Psoas muscle (tissue), 8 donors: ENCODE measurements at regions of chr14 and their contacts with region 1.

Region 1: DNA sequence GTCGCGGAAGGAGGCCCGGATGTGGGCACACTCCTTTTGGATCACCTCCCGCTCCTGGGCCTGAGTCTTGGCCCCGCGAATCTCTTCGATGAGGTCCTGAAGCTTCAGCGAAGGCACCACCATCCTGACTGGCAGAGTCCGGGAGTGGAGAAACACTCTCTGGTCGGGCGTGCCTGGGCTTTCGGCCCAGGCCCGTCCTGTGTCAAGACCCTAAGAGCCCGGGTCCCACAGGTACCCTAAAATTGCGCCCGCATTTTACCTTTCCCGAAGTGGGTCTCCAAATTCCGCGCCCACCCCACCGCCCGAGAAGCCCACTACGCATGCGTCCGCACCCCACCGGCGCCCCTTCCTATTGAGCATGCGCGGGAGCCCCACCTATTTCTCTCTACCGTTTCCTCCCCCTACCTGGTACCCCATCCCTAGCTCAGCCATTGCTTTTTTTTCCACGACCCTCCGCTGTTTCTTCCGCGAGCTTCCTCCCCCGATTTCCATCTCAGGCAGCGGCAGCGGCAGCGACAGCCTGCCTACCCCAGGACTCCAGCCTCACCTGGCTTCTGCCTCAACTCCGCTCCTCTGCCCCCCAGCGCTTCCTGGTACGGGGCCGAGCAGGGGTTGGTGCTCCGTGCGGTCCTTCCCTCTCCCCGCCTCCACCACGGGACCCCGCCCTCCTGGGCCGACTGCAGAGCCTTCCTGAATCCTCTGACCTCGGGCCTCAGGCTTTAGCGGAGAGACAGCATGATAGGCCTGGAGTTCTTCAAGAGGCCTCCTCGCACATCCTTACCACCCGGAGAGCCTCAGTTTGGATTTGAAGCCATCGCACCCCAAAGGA is at the start of gene AP1G2:
- DNase-seq: peak; percentile 84 to 89
- ATAC-seq: peak; percentile 40 to 73 (median 50)
- H3K4me3 ChIP-seq: peak within 1 kb of the TSS; percentile 78
- H3K27ac ChIP-seq: peak within 1 kb of the TSS; percentile 41
- H3K4me1 ChIP-seq: peaks cover 3% of the 10 kb centered on the region
- H3K27me3 ChIP-seq: peaks cover 0 to 5% (median 0%) of the 10 kb centered on the region in 3 donors
- CTCF ChIP-seq: no peak
- total RNA-seq, gene AP1G2: 4.4 to 11.0 (median 6.1) TPM

Region 2: GRCh38 chr14:23269193-23269592 is 298.2 kb before region 1 on chr14:
- intact Hi-C with region 1: loop called in 1 of 2 experiments (anchors 10 kb)
- DNase-seq: no peak
- ATAC-seq: no peak
- H3K4me3 ChIP-seq: no peak overlapping the region
- H3K27ac ChIP-seq: no peak overlapping the region
- H3K4me1 ChIP-seq: no peaks in the 10 kb centered on the region
- H3K27me3 ChIP-seq: peaks cover 0 to 6% (median 0%) of the 10 kb centered on the region in 3 donors
- CTCF ChIP-seq: no peak

Region 3: GRCh38 chr14:23301288-23301968 is 266.0 kb before region 1 on chr14:
- intact Hi-C with region 1: no loop called
- DNase-seq: peak; percentile 99
- ATAC-seq: peak; percentile 83 to 87 (median 84)
- H3K4me3 ChIP-seq: peak overlapping the region; percentile 78
- H3K27ac ChIP-seq: peak overlapping the region; percentile 93
- H3K4me1 ChIP-seq: peaks cover 31% of the 10 kb centered on the region
- H3K27me3 ChIP-seq: no peaks in the 10 kb centered on the region
- CTCF ChIP-seq: peak; percentile 80

Region 4: DNA sequence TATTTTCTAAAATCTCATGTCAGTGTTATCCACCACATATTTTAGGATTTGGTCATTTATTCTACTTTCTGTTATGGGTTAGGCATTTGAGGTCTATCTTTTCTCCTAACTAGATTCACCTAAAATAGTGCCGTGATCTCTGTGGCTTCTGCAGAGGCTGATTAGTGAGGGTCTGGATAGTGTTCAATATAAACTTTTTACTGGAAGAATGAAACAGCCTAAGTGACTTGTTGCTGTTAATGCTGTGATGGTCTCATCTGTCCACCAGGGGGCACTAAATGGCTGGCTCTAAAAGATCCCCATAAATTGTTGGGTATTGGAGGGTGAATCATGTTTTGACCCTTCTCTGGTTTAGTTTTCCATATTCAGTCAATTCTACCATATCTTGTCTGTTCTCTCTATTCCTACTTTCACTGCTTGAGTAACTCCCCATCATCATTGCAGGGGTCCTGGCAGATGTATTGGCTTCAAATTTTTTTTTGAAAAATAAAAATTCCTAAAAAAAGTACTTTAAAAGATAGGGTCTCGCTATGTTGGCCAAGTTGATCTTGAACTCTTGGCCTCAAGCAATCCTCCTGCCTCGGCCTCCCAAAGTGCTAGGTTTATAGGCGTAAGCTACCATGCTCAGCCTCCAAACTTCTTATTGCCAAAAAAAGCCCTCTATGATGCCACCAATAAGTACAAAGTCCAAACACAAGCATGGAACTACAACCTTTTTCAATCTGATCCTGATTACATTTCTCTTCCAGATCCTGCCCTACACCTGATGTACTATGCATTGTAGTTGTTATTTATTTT is 239.3 kb before region 1 on chr14:
- intact Hi-C with region 1: loop called in 1 of 2 experiments (anchors 5 kb)
- DNase-seq: peak in 1 of 2 donors; percentile 47
- ATAC-seq: peak; percentile 72 to 88 (median 76)
- H3K4me3 ChIP-seq: no peak overlapping the region
- H3K27ac ChIP-seq: no peak overlapping the region
- H3K4me1 ChIP-seq: peaks cover 6% of the 10 kb centered on the region
- H3K27me3 ChIP-seq: no peaks in the 10 kb centered on the region
- CTCF ChIP-seq: peak; percentile 90

Region 5: GRCh38 chr14:23478111-23478759 is 89.2 kb before region 1 on chr14:
- intact Hi-C with region 1: loop called (anchors 1 to 2 kb)
- DNase-seq: peak; percentile 46 to 64
- ATAC-seq: peak; percentile 50 to 83 (median 68)
- H3K4me3 ChIP-seq: no peak overlapping the region
- H3K27ac ChIP-seq: no peak overlapping the region
- H3K4me1 ChIP-seq: no peaks in the 10 kb centered on the region
- H3K27me3 ChIP-seq: no peaks in the 10 kb centered on the region
- CTCF ChIP-seq: peak; percentile 83

Region 6: DNA sequence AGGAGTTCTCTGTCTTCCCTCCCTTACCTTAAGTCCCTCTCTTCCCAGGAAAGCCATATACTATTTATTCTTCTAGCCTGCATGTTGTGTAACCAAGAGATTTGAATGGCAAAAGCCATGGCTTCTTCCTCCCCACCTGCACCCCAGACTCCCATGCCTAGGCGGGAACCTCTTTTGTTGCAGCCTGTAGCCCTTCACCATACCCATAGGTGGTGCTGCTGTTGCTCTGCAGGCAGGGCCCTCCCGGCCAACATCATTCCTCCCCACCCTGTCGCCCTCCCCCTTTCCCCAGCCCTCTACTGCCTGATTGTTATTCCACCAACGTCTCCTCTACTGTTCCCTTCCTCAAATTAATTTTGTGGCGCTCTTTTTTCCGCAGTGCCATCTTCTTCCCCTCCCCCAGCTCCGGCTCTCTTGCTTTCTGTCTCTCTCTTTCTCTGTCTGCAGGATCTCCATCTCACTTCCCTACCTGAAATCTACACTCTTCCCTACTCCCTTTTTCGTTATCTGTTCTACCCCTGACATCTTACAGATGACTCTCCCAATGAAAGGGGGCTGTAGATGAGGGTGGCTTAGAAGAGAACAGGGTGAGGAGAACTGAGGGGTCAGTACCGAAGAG is 84.1 kb before region 1 on chr14:
- intact Hi-C with region 1: loop called (anchors 1 to 2 kb)
- DNase-seq: no peak
- ATAC-seq: no peak
- H3K4me3 ChIP-seq: no peak overlapping the region
- H3K27ac ChIP-seq: no peak overlapping the region
- H3K4me1 ChIP-seq: no peaks in the 10 kb centered on the region
- H3K27me3 ChIP-seq: no peaks in the 10 kb centered on the region
- CTCF ChIP-seq: no peak

Region 7: DNA sequence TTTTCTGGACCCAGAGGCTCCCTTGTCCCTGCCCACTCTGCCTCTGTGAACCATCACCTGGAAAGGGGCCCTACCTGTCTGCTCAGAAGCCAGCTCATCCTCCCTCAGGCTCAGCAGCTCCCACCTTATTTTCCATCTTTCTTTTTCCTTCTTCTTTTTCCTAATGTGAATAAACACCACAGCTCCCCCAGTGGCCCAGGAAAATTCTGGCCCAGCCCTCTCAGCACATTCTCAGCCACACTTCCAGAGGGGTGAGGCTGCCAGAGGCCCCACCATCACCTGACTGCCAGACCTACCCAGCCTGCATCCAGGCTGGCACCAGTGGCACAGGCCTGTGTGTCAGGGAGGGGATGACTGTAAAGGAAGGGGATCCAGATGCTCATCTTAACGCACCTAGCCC is 38.9 kb before region 1 on chr14:
- intact Hi-C with region 1: no loop called
- DNase-seq: no peak
- ATAC-seq: no peak
- H3K4me3 ChIP-seq: no peak overlapping the region
- H3K27ac ChIP-seq: no peak overlapping the region
- H3K4me1 ChIP-seq: no peaks in the 10 kb centered on the region
- H3K27me3 ChIP-seq: peaks cover 0 to 2% (median 0%) of the 10 kb centered on the region in 3 donors
- CTCF ChIP-seq: no peak

Region 8: DNA sequence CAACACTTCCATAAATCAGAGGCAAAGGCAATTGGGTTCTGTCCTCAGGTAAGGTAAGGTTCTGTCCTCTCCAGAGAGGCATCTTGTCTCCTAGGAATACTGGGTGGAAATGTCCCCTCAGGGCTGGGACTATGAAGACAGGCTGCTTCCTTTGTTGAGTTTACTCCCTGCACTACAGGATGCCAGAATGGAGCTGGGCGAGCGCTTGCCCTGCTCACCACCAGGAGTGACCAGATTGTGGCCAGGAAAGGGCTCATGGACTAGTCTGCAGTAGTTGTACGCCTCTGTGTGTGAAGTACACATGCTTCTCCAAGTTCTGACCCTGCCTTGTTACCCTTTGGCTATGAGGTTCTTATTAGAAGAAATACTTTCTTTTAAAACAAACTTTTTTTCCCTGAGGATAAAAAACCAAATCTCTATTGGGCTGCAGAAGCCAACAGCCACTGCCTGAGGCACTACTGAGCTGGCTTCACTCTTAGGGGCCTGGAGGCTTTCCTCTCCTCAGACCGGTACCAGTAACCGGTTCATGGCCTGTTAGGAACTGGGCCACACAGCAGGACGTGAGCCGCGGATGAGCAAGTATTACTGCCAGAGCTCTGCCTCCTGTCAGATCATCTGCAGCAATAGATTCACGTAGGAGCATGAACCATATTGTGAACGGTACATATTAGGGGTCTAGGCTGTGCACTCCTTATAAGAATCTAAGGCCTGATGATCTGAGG is 152.0 kb after region 1 on chr14:
- intact Hi-C with region 1: no loop called
- DNase-seq: no peak
- ATAC-seq: no peak
- H3K4me3 ChIP-seq: no peak overlapping the region
- H3K27ac ChIP-seq: no peak overlapping the region
- H3K4me1 ChIP-seq: no peaks in the 10 kb centered on the region
- H3K27me3 ChIP-seq: no peaks in the 10 kb centered on the region
- CTCF ChIP-seq: no peak